Activated CD4-positive, alpha-beta T cell treated with anti-CD3 and anti-CD28 coated beads, Interleukin-2, amount 10 ng/mL, durations not matched to agents 24 days and 14 days (primary cell): ENCODE measurements at regions of chr17 and their contacts with region 1.

Region 1: GRCh38 chr17:16537130-16537458 is 31.9 kb downstream of the ZNF287 start:
- DNase-seq: no peak
- H3K4me3 Mint-ChIP-seq: peak overlapping the region; percentile 99
- H3K27ac Mint-ChIP-seq: no peak overlapping the region
- H3K4me1 Mint-ChIP-seq: peaks cover 14% of the 10 kb centered on the region
- H3K27me3 Mint-ChIP-seq: peaks cover 2% of the 10 kb centered on the region

Region 2: GRCh38 chr17:16391451-16391850 is 145.6 kb before region 1 on chr17:
- intact Hi-C with region 1: no loop called
- DNase-seq: no peak
- H3K4me3 Mint-ChIP-seq: no peak overlapping the region
- H3K27ac Mint-ChIP-seq: no peak overlapping the region
- H3K4me1 Mint-ChIP-seq: peaks cover 11% of the 10 kb centered on the region
- H3K27me3 Mint-ChIP-seq: peaks cover 9% of the 10 kb centered on the region

Region 3: DNA sequence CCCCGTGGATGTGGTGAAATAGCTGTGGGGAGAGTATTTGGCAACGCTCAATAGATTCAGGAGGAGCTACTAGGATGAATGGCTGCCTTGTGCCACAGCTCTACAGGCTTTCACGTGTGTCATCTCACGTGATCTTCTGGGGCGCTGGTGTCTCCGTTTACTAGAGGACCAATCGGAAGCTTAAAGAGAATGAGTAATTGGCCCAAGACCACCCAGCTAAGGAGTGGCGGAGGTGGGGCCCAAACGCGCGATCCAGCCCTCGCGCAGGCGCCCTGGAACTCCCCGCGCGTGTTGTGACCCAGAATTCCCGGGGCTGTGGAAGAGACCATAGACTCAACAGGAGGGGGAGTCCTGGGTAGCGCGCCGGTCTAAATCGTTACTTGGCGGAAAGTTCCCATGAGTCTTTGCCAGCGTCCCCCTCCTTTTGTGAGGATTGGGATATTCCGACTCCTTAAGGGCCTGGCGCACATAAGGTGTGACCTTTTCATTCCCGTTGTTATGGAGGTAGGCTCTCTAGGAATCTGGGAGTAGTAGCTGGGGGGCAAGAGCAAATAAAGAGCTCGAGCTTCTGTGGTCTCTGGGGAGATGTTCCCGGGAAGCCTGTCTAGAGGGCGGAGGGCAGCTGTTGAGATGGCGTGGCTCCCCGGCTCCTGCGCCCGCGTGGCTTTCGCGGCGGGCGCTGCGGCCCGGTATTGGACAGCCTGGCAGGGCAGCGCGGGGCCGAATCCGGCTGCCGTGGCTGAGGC is 98.4 kb before region 1 on chr17:
- intact Hi-C with region 1: loop called (anchors 1 kb)
- DNase-seq: peak; percentile 98
- H3K4me3 Mint-ChIP-seq: peak overlapping the region; percentile 99
- H3K27ac Mint-ChIP-seq: peak overlapping the region; percentile 99
- H3K4me1 Mint-ChIP-seq: peaks cover 45% of the 10 kb centered on the region
- H3K27me3 Mint-ChIP-seq: no peaks in the 10 kb centered on the region

Region 4: GRCh38 chr17:16589097-16589969 is 52.2 kb after region 1 on chr17:
- intact Hi-C with region 1: loop called (anchors 1 kb)
- DNase-seq: peak; percentile 98
- H3K4me3 Mint-ChIP-seq: peak overlapping the region; percentile 72
- H3K27ac Mint-ChIP-seq: no peak overlapping the region
- H3K4me1 Mint-ChIP-seq: peaks cover 6% of the 10 kb centered on the region
- H3K27me3 Mint-ChIP-seq: peaks cover 41% of the 10 kb centered on the region

Region 5: GRCh38 chr17:16873174-16874035 is 336.3 kb after region 1 on chr17:
- intact Hi-C with region 1: loop called (anchors 2 kb)
- DNase-seq: peak; percentile 75
- H3K4me3 Mint-ChIP-seq: no peak overlapping the region
- H3K27ac Mint-ChIP-seq: no peak overlapping the region
- H3K4me1 Mint-ChIP-seq: no peaks in the 10 kb centered on the region
- H3K27me3 Mint-ChIP-seq: peaks cover 2% of the 10 kb centered on the region